ENCODE measurements at regions of chr7 and their contacts with region 1.

Region 1: DNA sequence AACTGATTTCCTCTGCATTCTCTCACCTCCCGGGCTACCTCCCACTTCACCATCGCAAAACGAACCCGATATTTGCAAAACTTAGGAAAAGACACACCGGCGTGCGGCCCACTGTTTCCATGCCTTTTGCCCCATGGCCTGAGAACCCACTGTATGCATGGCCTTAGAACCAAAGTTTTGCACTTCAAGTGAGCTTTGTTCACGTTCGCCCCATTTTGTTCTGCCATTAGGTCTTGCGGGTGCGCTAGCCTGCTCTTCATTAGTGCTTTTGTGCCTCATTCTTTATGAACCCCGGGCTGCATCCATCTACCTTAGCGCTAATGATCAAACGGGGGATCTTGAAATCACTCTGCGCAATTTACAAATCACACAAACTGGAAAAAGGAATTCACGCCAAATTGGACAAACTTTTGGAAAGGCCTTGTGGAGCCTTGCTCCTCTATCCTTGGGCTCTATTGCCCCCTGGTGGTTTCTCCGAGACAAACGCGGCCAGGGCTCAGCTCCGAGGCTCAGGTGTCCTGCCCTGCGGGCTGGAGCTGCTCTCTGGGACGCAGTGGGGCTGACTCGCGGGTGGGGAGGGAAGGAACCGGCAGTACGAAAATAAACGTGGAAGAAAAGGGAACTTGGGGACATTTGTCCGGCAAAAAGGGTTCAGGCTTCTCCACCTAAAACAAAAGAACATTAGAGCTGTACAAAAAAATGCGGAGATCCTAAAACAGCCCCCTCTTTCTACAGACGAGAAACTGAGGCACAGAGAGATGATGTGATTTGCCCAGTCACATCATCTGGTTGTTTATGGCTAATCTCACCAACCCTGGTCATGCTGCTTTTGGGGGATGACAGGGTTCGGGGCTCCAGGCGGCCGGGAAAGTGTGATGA is 300.4 kb upstream of the NFE2L3 start:
- DNase-seq: peak; percentile 81 to 85
- H3K4me3 ChIP-seq: no peak overlapping the region
- H3K27ac ChIP-seq: peak overlapping the region in 1 of 3 donors; percentile 48
- H3K4me1 ChIP-seq: peaks cover 20 to 33% of the 10 kb centered on the region in 2 donors
- H3K27me3 ChIP-seq: peaks cover 41% of the 10 kb centered on the region
- CTCF ChIP-seq: peak; percentile 48 to 94 (median 90)
- POLR2A ChIP-seq: no peak

Region 2: GRCh38 chr7:24668922-24669635 is 1182.5 kb before region 1 on chr7:
- intact Hi-C with region 1: no loop called
- DNase-seq: no peak
- H3K4me3 ChIP-seq: no peak overlapping the region
- H3K27ac ChIP-seq: no peak overlapping the region
- H3K4me1 ChIP-seq: no peaks in the 10 kb centered on the region
- H3K27me3 ChIP-seq: no peaks in the 10 kb centered on the region
- CTCF ChIP-seq: no peak
- POLR2A ChIP-seq: no peak

Region 3: DNA sequence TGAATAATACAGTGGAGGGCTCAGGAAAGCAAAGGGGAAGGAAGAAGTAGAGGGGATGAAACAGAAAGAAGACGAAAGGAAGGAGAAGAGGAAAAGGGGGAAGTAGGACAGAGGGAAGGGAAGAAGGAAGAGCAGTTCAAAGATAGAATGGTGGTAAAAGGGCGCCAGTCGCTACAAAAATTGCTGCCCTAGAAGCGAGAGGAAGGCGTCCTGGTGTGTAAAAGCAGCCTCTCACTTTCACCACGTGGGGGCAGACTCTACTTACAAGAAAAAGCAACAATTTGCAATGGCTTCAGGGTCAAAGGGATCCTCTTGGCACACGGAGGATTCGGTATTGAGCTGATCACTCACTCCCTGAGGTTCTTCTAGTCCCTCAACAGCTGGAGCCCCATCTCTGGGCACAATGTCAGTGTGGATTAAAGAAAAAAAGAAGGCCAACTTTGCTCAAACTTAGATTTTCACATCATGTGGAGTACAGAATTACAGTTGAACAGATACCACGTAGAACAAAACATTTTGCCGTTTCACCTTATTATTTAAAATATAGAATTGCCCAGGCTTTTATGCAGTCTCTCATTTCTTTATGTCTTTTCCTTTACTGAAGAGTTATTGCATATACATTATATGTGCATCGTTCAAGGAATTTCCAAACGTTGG is 591.9 kb before region 1 on chr7:
- intact Hi-C with region 1: loop called (anchors 5 kb)
- DNase-seq: peak; percentile 69 to 76
- H3K4me3 ChIP-seq: no peak overlapping the region
- H3K27ac ChIP-seq: no peak overlapping the region
- H3K4me1 ChIP-seq: no peaks in the 10 kb centered on the region
- H3K27me3 ChIP-seq: no peaks in the 10 kb centered on the region
- CTCF ChIP-seq: peak; percentile 42 to 97 (median 84)
- POLR2A ChIP-seq: no peak

Region 4: GRCh38 chr7:25389489-25390106 is 462.0 kb before region 1 on chr7:
- intact Hi-C with region 1: loop called (anchors 10 kb)
- DNase-seq: peak in 1 of 2 donors; percentile 26
- H3K4me3 ChIP-seq: no peak overlapping the region
- H3K27ac ChIP-seq: no peak overlapping the region
- H3K4me1 ChIP-seq: peaks cover 10 to 19% of the 10 kb centered on the region in 2 donors
- H3K27me3 ChIP-seq: no peaks in the 10 kb centered on the region
- CTCF ChIP-seq: peak in 4 of 6 experiments; percentile 39 to 94 (median 68)
- POLR2A ChIP-seq: no peak

Region 5: DNA sequence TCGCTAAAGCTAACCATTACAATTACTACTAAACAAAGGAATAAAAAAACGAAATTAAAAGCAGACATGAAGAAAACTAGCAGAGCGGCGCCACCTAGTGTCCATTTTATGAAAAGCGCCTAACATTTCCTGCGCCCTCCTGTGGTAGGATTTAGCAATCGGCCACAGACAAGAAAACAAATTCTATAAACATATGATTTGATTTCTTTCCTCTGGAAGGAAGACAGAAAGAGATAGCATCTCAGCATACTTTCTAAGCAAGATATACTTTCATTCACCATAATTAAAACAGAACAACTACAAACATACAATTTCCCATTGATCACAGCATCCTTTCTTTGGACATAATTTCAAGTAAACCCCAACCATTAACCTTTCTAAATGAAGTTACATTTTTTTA is 285.6 kb before region 1 on chr7:
- intact Hi-C with region 1: loop called (anchors 5 kb)
- DNase-seq: peak; percentile 48 to 66
- H3K4me3 ChIP-seq: no peak overlapping the region
- H3K27ac ChIP-seq: no peak overlapping the region
- H3K4me1 ChIP-seq: no peaks in the 10 kb centered on the region
- H3K27me3 ChIP-seq: no peaks in the 10 kb centered on the region
- CTCF ChIP-seq: peak; percentile 98 to 100 (median 99)
- POLR2A ChIP-seq: no peak

Region 6: DNA sequence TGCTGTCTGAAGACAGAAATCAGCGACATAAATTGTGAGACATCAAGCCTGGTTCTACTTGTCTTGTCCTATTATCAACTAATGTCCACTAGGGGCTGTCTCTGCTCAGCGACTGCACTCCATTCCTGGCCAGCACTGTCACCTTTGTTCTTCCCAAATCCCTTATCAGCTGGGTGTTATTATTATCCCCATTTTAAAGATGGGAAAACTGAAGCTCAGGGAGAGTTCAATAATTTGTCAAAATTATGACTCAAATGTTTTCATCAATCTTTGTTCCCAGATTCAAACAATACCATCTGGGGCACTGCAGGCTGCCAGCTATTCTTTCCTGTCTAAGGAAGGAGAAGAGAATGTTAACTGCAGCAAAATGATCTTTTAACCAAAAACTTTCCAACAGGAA is 131.1 kb before region 1 on chr7:
- intact Hi-C with region 1: loop called (anchors 5 kb)
- DNase-seq: peak; percentile 3 to 16
- H3K4me3 ChIP-seq: no peak overlapping the region
- H3K27ac ChIP-seq: no peak overlapping the region
- H3K4me1 ChIP-seq: no peaks in the 10 kb centered on the region
- H3K27me3 ChIP-seq: no peaks in the 10 kb centered on the region
- CTCF ChIP-seq: peak; percentile 12 to 58 (median 35)
- POLR2A ChIP-seq: no peak

Region 7: GRCh38 chr7:25731068-25731845 is 120.3 kb before region 1 on chr7:
- intact Hi-C with region 1: no loop called
- DNase-seq: no peak
- H3K4me3 ChIP-seq: no peak overlapping the region
- H3K27ac ChIP-seq: peak overlapping the region in 1 of 3 donors; percentile 6
- H3K4me1 ChIP-seq: peaks cover 0 to 8% of the 10 kb centered on the region in 2 donors
- H3K27me3 ChIP-seq: no peaks in the 10 kb centered on the region
- CTCF ChIP-seq: no peak
- POLR2A ChIP-seq: no peak

Region 8: GRCh38 chr7:27160546-27161213 is 1309.1 kb after region 1 on chr7:
- intact Hi-C with region 1: loop called (anchors 10 kb)
- DNase-seq: peak; percentile 82 to 86
- H3K4me3 ChIP-seq: peak overlapping the region in 2 of 3 donors; percentile 26 to 42
- H3K27ac ChIP-seq: no peak overlapping the region
- H3K4me1 ChIP-seq: peaks cover 12 to 32% of the 10 kb centered on the region in 2 donors
- H3K27me3 ChIP-seq: peaks cover 64% of the 10 kb centered on the region
- CTCF ChIP-seq: peak; percentile 90 to 100 (median 98)
- POLR2A ChIP-seq: no peak

Measured in thyroid gland (tissue), 4 donors.